ENCODE measurements at regions of chr5 and their contacts with region 1.

Region 1: GRCh38 chr5:172958331-172959046 is 735 bp upstream of the RPL26L1 start:
- DNase-seq: peak; percentile 72
- H3K4me3 Mint-ChIP-seq: peak overlapping the region; percentile 87
- H3K27ac Mint-ChIP-seq: peak overlapping the region; percentile 91
- H3K4me1 Mint-ChIP-seq: peaks cover 26% of the 10 kb centered on the region
- H3K27me3 Mint-ChIP-seq: peaks cover 8% of the 10 kb centered on the region

Region 2: GRCh38 chr5:172708183-172708505 is 250.3 kb before region 1 on chr5:
- CTCF ChIA-PET with region 1: no interaction called
- POLR2A ChIA-PET with region 1: no interaction called
- DNase-seq: no peak
- H3K4me3 Mint-ChIP-seq: no peak overlapping the region
- H3K27ac Mint-ChIP-seq: no peak overlapping the region
- H3K4me1 Mint-ChIP-seq: no peaks in the 10 kb centered on the region
- H3K27me3 Mint-ChIP-seq: peaks cover 28% of the 10 kb centered on the region

Region 3: GRCh38 chr5:172973127-172973916 is 14.8 kb after region 1 on chr5:
- CTCF ChIA-PET with region 1: interaction called, 16 read pairs
- POLR2A ChIA-PET with region 1: interaction called, 6 read pairs
- DNase-seq: no peak
- H3K4me3 Mint-ChIP-seq: no peak overlapping the region
- H3K27ac Mint-ChIP-seq: no peak overlapping the region
- H3K4me1 Mint-ChIP-seq: no peaks in the 10 kb centered on the region
- H3K27me3 Mint-ChIP-seq: no peaks in the 10 kb centered on the region

Measured in activated CD4-positive, alpha-beta memory T cell treated with anti-CD3 and anti-CD28 coated beads, Interleukin-2, amount 10 ng/mL, durations not matched to agents 7 days and 5 days (primary cell).